Esophagus squamous epithelium (tissue), 5 donors: ENCODE measurements at regions of chr3 and their contacts with region 1.

Region 1: GRCh38 chr3:142129516-142130171 is 19.7 kb downstream of the TFDP2 start:
- DNase-seq: no peak
- H3K4me3 ChIP-seq: no peak overlapping the region
- H3K27ac ChIP-seq: no peak overlapping the region
- H3K4me1 ChIP-seq: no peaks in the 10 kb centered on the region
- H3K27me3 ChIP-seq: no peaks in the 10 kb centered on the region
- CTCF ChIP-seq: peak in 1 of 6 experiments; percentile 29
- POLR2A ChIP-seq: no peak

Region 2: DNA sequence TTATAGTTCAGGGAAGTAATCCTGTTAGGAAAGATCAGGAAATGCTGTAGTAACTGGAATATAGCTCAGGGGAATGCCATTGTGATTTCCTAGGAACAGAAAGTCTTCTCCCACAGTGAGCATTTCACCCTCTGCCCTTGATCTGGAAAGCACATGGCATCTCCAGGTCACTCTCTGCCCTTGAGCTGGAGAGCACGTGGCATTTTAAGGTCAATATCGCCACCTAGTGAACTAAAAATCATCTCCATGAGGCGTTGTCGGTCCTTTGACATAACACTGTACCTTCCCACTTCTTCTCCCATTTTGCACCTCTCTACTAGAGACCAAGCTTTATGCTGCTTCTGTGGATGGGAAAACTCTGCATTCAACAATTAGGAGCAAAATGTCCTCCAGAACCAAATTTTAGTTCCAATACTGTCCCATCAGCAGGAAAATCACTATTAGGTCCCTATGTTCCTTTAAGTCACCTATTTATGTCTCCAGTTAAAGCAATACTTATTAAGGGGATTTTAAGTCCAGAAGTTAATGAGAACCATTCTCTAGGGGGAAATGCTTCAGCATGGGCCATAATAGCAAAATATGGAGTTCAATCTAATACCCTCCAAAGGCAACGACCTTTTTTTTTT is 150.4 kb after region 1 on chr3:
- intact Hi-C with region 1: loop called (anchors 5 kb)
- DNase-seq: no peak
- H3K4me3 ChIP-seq: no peak overlapping the region
- H3K27ac ChIP-seq: no peak overlapping the region
- H3K4me1 ChIP-seq: peaks cover 0 to 10% (median 0%) of the 10 kb centered on the region in 3 donors
- H3K27me3 ChIP-seq: no peaks in the 10 kb centered on the region
- CTCF ChIP-seq: peak; percentile 27 to 71 (median 60)
- POLR2A ChIP-seq: no peak

Region 3: GRCh38 chr3:142947799-142948575 is 818.3 kb after region 1 on chr3:
- intact Hi-C with region 1: no loop called
- DNase-seq: no peak
- H3K4me3 ChIP-seq: no peak overlapping the region
- H3K27ac ChIP-seq: no peak overlapping the region
- H3K4me1 ChIP-seq: peaks cover 0 to 7% (median 0%) of the 10 kb centered on the region in 3 donors
- H3K27me3 ChIP-seq: peaks cover 0 to 55% (median 0%) of the 10 kb centered on the region in 4 donors
- CTCF ChIP-seq: no peak
- POLR2A ChIP-seq: no peak